ENCODE measurements at regions of chr17 and their contacts with region 1.

Region 1: GRCh38 chr17:7435221-7435675 is at the start of gene TMEM102:
- DNase-seq: peak; percentile 86
- H3K4me3 ChIP-seq: peak within 1 kb of the TSS; percentile 38 to 80 (median 60)
- H3K27ac ChIP-seq: peak within 1 kb of the TSS; percentile 92 to 94 (median 94)
- H3K4me1 ChIP-seq: peaks cover 42 to 57% (median 49%) of the 10 kb centered on the region in 3 donors
- H3K27me3 ChIP-seq: peaks cover 0 to 51% (median 5%) of the 10 kb centered on the region in 4 donors
- CTCF ChIP-seq: peak in 1 of 6 experiments; percentile 14
- POLR2A ChIP-seq: peak in 2 of 4 donors; percentile 40 to 64
- total RNA-seq, gene TMEM102: 12.2 to 20.8 (median 16.9) TPM

Region 2: GRCh38 chr17:7356072-7356549 is 79.1 kb before region 1 on chr17:
- intact Hi-C with region 1: loop called (anchors 5 kb)
- DNase-seq: no peak
- H3K4me3 ChIP-seq: peak overlapping the region in 1 of 4 donors; percentile 5
- H3K27ac ChIP-seq: peak overlapping the region; percentile 98 to 100 (median 98)
- H3K4me1 ChIP-seq: peaks cover 32 to 53% (median 39%) of the 10 kb centered on the region in 3 donors
- H3K27me3 ChIP-seq: no peaks in the 10 kb centered on the region
- CTCF ChIP-seq: peak; percentile 85 to 96 (median 90)
- POLR2A ChIP-seq: no peak

Measured in esophagus squamous epithelium (tissue), 5 donors.